GM13977 (cell line): ENCODE measurements at regions of chr17 and their contacts with region 1.

Region 1: DNA sequence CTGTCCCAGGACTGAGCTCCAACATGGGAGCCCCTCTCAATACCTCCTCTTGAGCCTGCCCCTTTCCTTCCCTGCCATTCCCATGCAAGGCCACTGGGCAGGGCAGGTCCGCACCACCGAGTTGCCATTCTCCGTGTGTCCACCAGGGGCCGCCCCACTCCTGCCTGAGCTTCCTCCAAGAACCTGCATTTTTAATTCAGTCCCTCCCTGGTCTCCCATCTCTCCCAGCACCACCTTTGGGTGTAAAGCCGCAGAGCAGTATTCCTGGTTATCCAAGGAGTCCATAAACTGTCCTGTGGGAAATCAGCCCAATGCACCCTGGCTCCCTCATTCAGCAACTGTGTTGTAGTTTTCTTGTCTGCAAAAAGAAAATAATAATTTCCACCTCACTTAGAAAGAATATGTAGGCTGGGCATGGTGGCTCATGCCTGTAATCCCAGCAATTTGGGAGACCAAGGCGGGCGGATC is 15.9 kb upstream of the ANKRD40CL start:
- DNase-seq: peak; percentile 91
- CTCF ChIP-seq: peak; percentile 99

Region 2: GRCh38 chr17:50686494-50687199 is 96.6 kb before region 1 on chr17:
- in situ Hi-C with region 1: no loop called
- DNase-seq: no peak
- CTCF ChIP-seq: no peak

Region 3: GRCh38 chr17:50834429-50835300 is 51.4 kb after region 1 on chr17:
- in situ Hi-C with region 1: loop called (anchors 5 kb)
- DNase-seq: peak; percentile 23
- CTCF ChIP-seq: no peak

Region 4: DNA sequence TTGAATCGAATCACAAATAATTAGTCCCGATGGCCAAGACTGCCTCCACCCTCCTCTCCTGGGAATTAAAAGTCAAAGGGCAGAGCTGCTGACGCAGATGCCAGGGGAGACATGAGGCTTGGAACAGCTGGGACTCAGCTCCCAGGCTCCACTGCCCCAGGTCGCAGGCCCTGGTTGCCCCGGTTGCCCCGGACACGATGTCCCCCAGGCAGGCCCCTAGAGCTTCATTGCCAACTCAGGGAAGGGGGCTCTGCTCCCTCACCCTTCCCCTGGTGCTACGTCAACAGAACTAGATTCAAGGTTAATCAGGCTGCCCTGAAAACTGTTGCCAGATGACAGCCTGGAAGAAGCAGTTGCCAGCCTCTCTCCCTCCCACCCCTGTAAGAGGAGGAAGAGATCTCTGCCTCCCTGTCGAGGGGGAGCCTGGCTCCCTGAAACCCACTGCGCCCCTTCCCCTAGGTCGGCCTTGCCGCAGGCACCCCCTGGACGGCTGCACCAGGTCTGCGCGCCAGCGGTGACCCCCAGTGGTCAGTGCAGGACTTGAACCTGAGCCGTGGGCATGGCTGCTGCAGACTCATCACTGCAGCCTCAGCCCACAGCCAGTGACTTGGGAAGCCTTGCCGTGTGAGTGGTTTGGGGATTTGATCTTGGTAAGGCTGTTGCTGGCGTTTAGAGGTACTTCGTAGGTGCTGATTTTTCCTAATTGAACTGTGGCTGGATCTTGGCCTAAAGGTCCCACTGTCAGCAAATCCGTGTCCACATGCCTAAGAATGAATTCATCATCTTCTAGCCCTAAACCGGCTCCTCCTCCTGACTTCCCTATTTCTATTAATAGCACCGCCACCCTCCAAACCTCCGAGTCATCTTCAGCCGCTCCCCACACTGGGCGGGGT is 167.0 kb after region 1 on chr17:
- in situ Hi-C with region 1: loop called (anchors 10 kb)
- DNase-seq: peak; percentile 77
- CTCF ChIP-seq: peak; percentile 89